AG04449 (cell line): ENCODE measurements at regions of chr3 and their contacts with region 1.

Region 1: GRCh38 chr3:48194446-48195071 is 6.3 kb upstream of the CDC25A start:
- DNase-seq: no peak
- H3K4me3 ChIP-seq: no peak overlapping the region
- CTCF ChIP-seq: peak; percentile 79

Region 2: DNA sequence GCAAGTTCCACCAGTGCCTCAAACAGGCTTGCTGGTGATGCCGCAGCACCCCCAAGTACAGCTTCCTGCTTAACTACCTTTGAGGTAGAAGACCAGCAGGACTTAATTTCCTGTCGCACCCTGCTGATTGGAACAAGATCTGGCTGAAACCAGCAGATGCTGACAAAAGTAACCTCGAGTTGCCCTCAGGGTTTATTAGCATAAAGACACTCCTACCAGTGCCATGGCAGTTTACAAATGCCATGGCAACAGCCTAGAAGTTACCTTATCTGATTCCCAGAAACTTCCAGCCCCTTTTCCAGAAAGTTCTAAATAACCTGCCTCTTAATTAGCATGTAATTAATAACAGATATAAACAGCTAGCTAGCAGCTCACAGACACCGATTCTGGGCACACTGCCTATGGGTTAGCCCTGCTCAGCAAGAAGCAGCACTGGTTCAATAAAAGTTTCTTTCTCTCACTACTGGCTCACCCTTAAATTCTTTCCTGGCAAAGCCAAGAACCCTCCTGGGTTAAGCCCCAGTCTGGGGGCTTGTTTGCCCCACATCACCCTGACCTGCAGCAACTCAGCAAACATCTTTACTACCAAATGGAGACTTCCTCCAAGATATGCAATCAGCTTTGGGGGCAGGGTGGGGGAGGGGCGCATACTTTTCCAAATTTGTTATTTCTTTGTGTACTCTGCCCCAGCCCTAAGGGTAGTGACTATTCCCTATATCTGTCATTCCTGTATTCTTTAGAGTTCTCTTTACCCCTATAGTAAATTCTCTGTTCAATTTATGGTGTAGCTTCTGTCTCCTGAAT is 232.5 kb before region 1 on chr3:
- CTCF ChIA-PET with region 1: no interaction called
- POLR2A ChIA-PET with region 1: no interaction called
- DNase-seq: no peak
- H3K4me3 ChIP-seq: no peak overlapping the region
- CTCF ChIP-seq: no peak

Region 3: GRCh38 chr3:48023377-48023776 is 171.2 kb before region 1 on chr3:
- CTCF ChIA-PET with region 1: no interaction called
- POLR2A ChIA-PET with region 1: no interaction called
- DNase-seq: no peak
- H3K4me3 ChIP-seq: no peak overlapping the region
- CTCF ChIP-seq: no peak

Region 4: GRCh38 chr3:48208076-48208475 is 13.5 kb after region 1 on chr3:
- CTCF ChIA-PET with region 1: interaction called, 34 read pairs
- POLR2A ChIA-PET with region 1: no interaction called
- DNase-seq: no peak
- H3K4me3 ChIP-seq: no peak overlapping the region
- CTCF ChIP-seq: no peak

Region 5: DNA sequence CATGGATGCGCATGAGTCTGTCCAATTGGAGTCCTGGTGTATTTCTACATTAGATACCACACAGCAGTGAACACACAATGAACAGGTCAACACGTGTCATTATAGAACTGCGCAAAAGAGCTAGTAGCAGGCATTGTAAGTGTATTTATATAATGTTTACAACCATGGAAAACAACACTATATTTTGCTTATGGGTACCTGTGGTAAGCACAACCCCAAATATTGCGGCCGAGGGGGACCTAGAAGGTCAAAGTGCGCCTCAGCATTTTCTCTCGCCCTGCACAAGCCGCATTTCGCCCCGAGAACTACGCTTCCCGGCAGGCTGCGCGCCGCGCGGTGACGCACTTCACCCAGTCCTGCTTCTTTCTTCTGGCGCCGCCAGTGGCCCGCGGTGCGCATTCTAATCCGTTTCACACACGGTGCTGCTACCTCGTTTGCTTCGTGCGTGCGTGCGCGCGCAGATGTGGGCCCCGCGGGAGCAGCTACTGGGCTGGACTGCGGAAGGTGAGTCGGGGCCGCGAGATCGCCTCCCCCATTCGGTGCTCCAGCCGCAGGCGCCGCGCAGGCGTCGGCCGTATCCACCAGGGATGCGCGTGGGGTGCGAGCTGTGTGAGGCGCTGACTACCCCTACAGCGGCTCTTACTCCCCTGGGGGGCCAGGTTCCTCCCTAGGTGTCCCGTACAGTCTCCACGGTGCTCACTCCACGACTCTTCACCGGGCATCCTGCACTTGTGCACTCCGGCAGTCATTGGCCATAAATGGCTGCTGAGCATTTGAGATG is 46.3 kb after region 1 on chr3 and contains the start of gene ZNF589:
- CTCF ChIA-PET with region 1: interaction called, 12 read pairs
- POLR2A ChIA-PET with region 1: no interaction called
- DNase-seq: peak; percentile 19
- H3K4me3 ChIP-seq: peak within 1 kb of the TSS; percentile 89
- CTCF ChIP-seq: peak; percentile 31

Region 6: GRCh38 chr3:48573973-48574585 is 379.5 kb after region 1 on chr3:
- CTCF ChIA-PET with region 1: no interaction called
- POLR2A ChIA-PET with region 1: no interaction called
- DNase-seq: no peak
- H3K4me3 ChIP-seq: no peak overlapping the region
- CTCF ChIP-seq: no peak